HCT116 (cell line): ENCODE measurements at regions of chr1 and their contacts with region 1.

Region 1: GRCh38 chr1:50929376-50929958 is 30.6 kb downstream of the FAF1 start:
- DNase-seq: peak; percentile 16
- ATAC-seq: no peak
- H3K4me3 ChIP-seq: no peak overlapping the region
- H3K27ac ChIP-seq: no peak overlapping the region
- H3K4me1 ChIP-seq: no peaks in the 10 kb centered on the region
- H3K27me3 ChIP-seq: no peaks in the 10 kb centered on the region
- CTCF ChIP-seq: peak; percentile 44 to 69 (median 53); a peak in 5 of 6 replicates
- POLR2A ChIP-seq: no peak
- RAD21 ChIP-seq: peak; percentile 67

Region 2: GRCh38 chr1:50774759-50775351 is 154.6 kb before region 1 on chr1:
- CTCF ChIA-PET with region 1: interaction called, 12 read pairs
- POLR2A ChIA-PET with region 1: no interaction called
- RAD21 ChIA-PET with region 1: no interaction called
- intact Hi-C with region 1: loop called (anchors 1 kb)
- DNase-seq: peak; percentile 48
- ATAC-seq: peak; percentile 59; the same call in 1 of the 2 replicates
- H3K4me3 ChIP-seq: no peak overlapping the region
- H3K27ac ChIP-seq: no peak overlapping the region
- H3K4me1 ChIP-seq: no peaks in the 10 kb centered on the region
- H3K27me3 ChIP-seq: no peaks in the 10 kb centered on the region
- CTCF ChIP-seq: peak; percentile 60 to 71 (median 68)
- POLR2A ChIP-seq: no peak
- RAD21 ChIP-seq: peak; percentile 77

Region 3: GRCh38 chr1:50796272-50796671 is 133.2 kb before region 1 on chr1:
- CTCF ChIA-PET with region 1: no interaction called
- POLR2A ChIA-PET with region 1: no interaction called
- RAD21 ChIA-PET with region 1: no interaction called
- intact Hi-C with region 1: no loop called
- DNase-seq: no peak
- ATAC-seq: no peak
- H3K4me3 ChIP-seq: no peak overlapping the region
- H3K27ac ChIP-seq: no peak overlapping the region
- H3K4me1 ChIP-seq: no peaks in the 10 kb centered on the region
- H3K27me3 ChIP-seq: no peaks in the 10 kb centered on the region
- CTCF ChIP-seq: no peak
- POLR2A ChIP-seq: no peak
- RAD21 ChIP-seq: no peak

Region 4: GRCh38 chr1:50940291-50940690 is 10.8 kb after region 1 on chr1:
- CTCF ChIA-PET with region 1: interaction called, 10 read pairs
- POLR2A ChIA-PET with region 1: no interaction called
- RAD21 ChIA-PET with region 1: no interaction called
- intact Hi-C with region 1: no loop called
- DNase-seq: no peak
- ATAC-seq: no peak
- H3K4me3 ChIP-seq: no peak overlapping the region
- H3K27ac ChIP-seq: no peak overlapping the region
- H3K4me1 ChIP-seq: no peaks in the 10 kb centered on the region
- H3K27me3 ChIP-seq: no peaks in the 10 kb centered on the region
- CTCF ChIP-seq: no peak
- POLR2A ChIP-seq: no peak
- RAD21 ChIP-seq: no peak

Region 5: GRCh38 chr1:51044834-51045233 is 115.4 kb after region 1 on chr1:
- CTCF ChIA-PET with region 1: interaction called, 11 read pairs
- POLR2A ChIA-PET with region 1: no interaction called
- RAD21 ChIA-PET with region 1: no interaction called
- intact Hi-C with region 1: loop called (anchors 1 kb)
- DNase-seq: no peak
- ATAC-seq: no peak
- H3K4me3 ChIP-seq: no peak overlapping the region
- H3K27ac ChIP-seq: no peak overlapping the region
- H3K4me1 ChIP-seq: no peaks in the 10 kb centered on the region
- H3K27me3 ChIP-seq: no peaks in the 10 kb centered on the region
- CTCF ChIP-seq: peak in 2 of 3 experiments; percentile 47 to 75; a peak in 2 of 6 replicates
- POLR2A ChIP-seq: no peak
- RAD21 ChIP-seq: peak; percentile 69